CD4-positive, alpha-beta memory T cell (primary cell): ENCODE measurements at regions of chr3 and their contacts with region 1.

Region 1: DNA sequence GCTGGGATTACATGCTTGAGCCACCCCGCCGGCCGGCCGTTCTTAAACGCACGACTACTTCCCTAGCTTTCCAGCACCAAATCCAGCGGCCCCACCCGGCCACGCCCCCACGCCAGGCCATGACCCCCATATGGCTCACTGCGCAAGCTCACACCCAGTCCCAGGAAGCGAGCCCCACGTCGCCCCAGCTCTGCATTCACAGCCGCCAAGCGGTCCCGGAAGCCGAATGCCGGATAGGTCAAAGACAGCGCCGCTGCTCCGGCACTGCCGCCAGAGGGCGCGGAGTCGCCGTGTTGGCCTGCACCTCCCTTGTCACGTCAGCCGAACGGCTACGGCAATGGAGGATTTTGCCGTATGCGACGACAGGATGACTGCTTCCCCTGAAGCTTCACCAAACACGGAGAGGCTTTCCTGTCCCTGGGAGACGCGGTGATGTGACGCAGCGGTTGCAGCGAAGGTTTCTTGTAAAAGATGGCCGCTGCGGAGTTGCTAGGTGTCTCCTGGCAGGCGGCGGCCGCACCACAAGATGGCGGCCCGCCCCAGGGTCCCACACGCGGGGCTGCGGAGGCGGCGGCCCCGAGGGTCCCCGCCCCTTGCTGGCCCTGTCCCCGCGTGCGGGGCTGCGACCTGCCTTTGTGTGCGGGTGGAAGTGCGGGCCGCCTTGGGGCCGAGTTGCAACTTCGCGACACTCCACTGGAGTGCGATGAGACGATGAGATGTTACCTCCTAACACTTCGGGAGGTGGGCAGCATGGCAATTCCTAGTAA is 30.2 kb upstream of the RPN1 start:
- DNase-seq: peak; percentile 96 to 97 (median 97)
- H3K4me3 ChIP-seq: peak overlapping the region; percentile 76 to 85
- H3K4me3 Mint-ChIP-seq: peak overlapping the region; percentile 87 to 98 (median 97)
- H3K27ac ChIP-seq: peak overlapping the region; percentile 89
- H3K27ac Mint-ChIP-seq: peak overlapping the region; percentile 95 to 99 (median 99)
- H3K4me1 ChIP-seq: peaks cover 27% of the 10 kb centered on the region
- H3K4me1 Mint-ChIP-seq: peaks cover 15 to 36% (median 19%) of the 10 kb centered on the region in 4 donors
- H3K27me3 ChIP-seq: no peaks in the 10 kb centered on the region
- H3K27me3 Mint-ChIP-seq: no peaks in the 10 kb centered on the region

Region 2: GRCh38 chr3:128617557-128618397 is 63.0 kb before region 1 on chr3:
- CTCF ChIA-PET with region 1: interaction called, 22 read pairs
- POLR2A ChIA-PET with region 1: interaction called, 26 read pairs
- intact Hi-C with region 1: loop called (anchors 1 kb)
- DNase-seq: peak; percentile 98 to 99 (median 99)
- H3K4me3 ChIP-seq: peak overlapping the region; percentile 81 to 91
- H3K4me3 Mint-ChIP-seq: peak overlapping the region; percentile 93 to 99 (median 96)
- H3K27ac ChIP-seq: peak overlapping the region; percentile 88
- H3K27ac Mint-ChIP-seq: peak overlapping the region; percentile 93 to 99 (median 98)
- H3K4me1 ChIP-seq: peaks cover 23% of the 10 kb centered on the region
- H3K4me1 Mint-ChIP-seq: peaks cover 17 to 30% (median 23%) of the 10 kb centered on the region in 4 donors
- H3K27me3 ChIP-seq: no peaks in the 10 kb centered on the region
- H3K27me3 Mint-ChIP-seq: no peaks in the 10 kb centered on the region

Region 3: DNA sequence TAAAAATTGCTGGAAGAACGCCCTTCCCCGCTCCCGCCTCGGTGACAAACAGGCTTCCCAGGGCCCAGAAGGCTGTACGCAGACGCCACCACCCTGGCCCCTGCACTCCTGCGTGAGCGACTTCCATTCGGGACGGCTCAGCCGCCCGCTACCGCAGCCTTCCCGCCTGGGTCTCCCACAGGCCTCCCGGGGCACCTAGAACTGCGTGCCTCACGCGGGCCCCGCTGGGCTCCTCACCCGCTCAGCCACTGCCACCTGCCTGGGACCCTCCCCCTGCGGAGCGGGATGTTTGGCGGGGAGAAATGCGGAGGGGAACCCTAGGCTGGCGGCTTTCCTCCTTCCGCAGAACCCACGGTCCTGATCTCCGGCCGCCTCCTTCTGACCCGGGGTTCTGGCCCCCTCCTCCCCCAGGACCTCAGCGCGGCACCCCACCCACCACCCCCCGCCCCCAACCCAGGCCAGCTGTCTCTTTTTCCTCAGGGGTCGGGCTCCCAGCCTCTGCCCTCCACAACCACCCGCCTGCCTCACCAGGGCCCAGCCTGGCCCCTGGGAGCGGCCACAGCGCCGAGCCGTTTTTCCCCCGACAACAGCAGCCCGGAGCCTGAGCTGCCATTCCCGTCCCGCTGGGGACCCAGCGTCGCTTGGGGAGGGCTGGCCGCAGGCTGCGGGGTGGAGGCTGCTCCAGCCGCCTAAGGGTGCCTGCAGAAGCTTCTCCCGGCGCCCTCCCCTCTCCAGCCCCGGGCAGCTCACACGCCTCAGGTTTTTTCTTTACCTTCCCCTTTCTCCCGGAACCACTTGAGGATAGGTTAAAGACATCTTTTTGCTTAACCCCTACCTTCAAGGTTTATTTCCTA is 17.7 kb after region 1 on chr3:
- CTCF ChIA-PET with region 1: interaction called, 4 read pairs
- POLR2A ChIA-PET with region 1: interaction called, 3 read pairs
- intact Hi-C with region 1: loop called (anchors 2 kb)
- DNase-seq: peak in 2 of 5 donors; percentile 14 to 21
- H3K4me3 ChIP-seq: peak overlapping the region in 1 of 2 donors; percentile 35
- H3K4me3 Mint-ChIP-seq: peak overlapping the region; percentile 61 to 82 (median 79)
- H3K27ac ChIP-seq: no peak overlapping the region
- H3K27ac Mint-ChIP-seq: peak overlapping the region in 3 of 7 donors; percentile 64 to 78 (median 64)
- H3K4me1 ChIP-seq: no peaks in the 10 kb centered on the region
- H3K4me1 Mint-ChIP-seq: peaks cover 0 to 1% (median 0%) of the 10 kb centered on the region in 4 donors
- H3K27me3 ChIP-seq: no peaks in the 10 kb centered on the region
- H3K27me3 Mint-ChIP-seq: no peaks in the 10 kb centered on the region

Region 4: GRCh38 chr3:128767094-128767750 is 86.4 kb after region 1 on chr3:
- CTCF ChIA-PET with region 1: interaction called, 10 read pairs
- POLR2A ChIA-PET with region 1: interaction called, 3 read pairs
- intact Hi-C with region 1: no loop called
- DNase-seq: no peak
- H3K4me3 ChIP-seq: no peak overlapping the region
- H3K4me3 Mint-ChIP-seq: peak overlapping the region in 5 of 8 donors; percentile 16 to 69 (median 57)
- H3K27ac ChIP-seq: no peak overlapping the region
- H3K27ac Mint-ChIP-seq: peak overlapping the region in 5 of 7 donors; percentile 9 to 72 (median 18)
- H3K4me1 ChIP-seq: peaks cover 54% of the 10 kb centered on the region
- H3K4me1 Mint-ChIP-seq: peaks cover 58 to 96% (median 74%) of the 10 kb centered on the region in 4 donors
- H3K27me3 ChIP-seq: no peaks in the 10 kb centered on the region
- H3K27me3 Mint-ChIP-seq: no peaks in the 10 kb centered on the region

Region 5: GRCh38 chr3:128794770-128795649 is 114.2 kb after region 1 on chr3:
- CTCF ChIA-PET with region 1: interaction called, 186 read pairs
- POLR2A ChIA-PET with region 1: interaction called, 78 read pairs
- intact Hi-C with region 1: loop called (anchors 1 kb)
- DNase-seq: peak; percentile 71 to 75 (median 74)
- H3K4me3 ChIP-seq: no peak overlapping the region
- H3K4me3 Mint-ChIP-seq: peak overlapping the region in 4 of 8 donors; percentile 7 to 47 (median 22)
- H3K27ac ChIP-seq: peak overlapping the region; percentile 18
- H3K27ac Mint-ChIP-seq: peak overlapping the region; percentile 73 to 91 (median 88)
- H3K4me1 ChIP-seq: peaks cover 58% of the 10 kb centered on the region
- H3K4me1 Mint-ChIP-seq: peaks cover 37 to 68% (median 55%) of the 10 kb centered on the region in 4 donors
- H3K27me3 ChIP-seq: no peaks in the 10 kb centered on the region
- H3K27me3 Mint-ChIP-seq: no peaks in the 10 kb centered on the region

Region 6: GRCh38 chr3:128879125-128879969 is 198.6 kb after region 1 on chr3 and contains the start of gene ACAD9:
- CTCF ChIA-PET with region 1: interaction called, 32 read pairs
- POLR2A ChIA-PET with region 1: interaction called, 26 read pairs
- intact Hi-C with region 1: loop called (anchors 1 kb)
- DNase-seq: peak; percentile 97
- H3K4me3 ChIP-seq: peak within 1 kb of the TSS; percentile 82 to 91
- H3K4me3 Mint-ChIP-seq: peak within 1 kb of the TSS; percentile 85 to 97 (median 94)
- H3K27ac ChIP-seq: peak within 1 kb of the TSS; percentile 92
- H3K27ac Mint-ChIP-seq: peak within 1 kb of the TSS; percentile 92 to 99 (median 99)
- H3K4me1 ChIP-seq: peaks cover 38% of the 10 kb centered on the region
- H3K4me1 Mint-ChIP-seq: peaks cover 47 to 79% (median 61%) of the 10 kb centered on the region in 4 donors
- H3K27me3 ChIP-seq: no peaks in the 10 kb centered on the region
- H3K27me3 Mint-ChIP-seq: no peaks in the 10 kb centered on the region
- total RNA-seq, gene ACAD9: 54.9 to 62.2 TPM